ENCODE measurements at regions of chr2 and their contacts with region 1.

Region 1: GRCh38 chr2:37489041-37489456 is 144.6 kb downstream of the QPCT start:
- DNase-seq: no peak
- H3K4me3 ChIP-seq: no peak overlapping the region
- H3K27ac ChIP-seq: no peak overlapping the region
- H3K4me1 ChIP-seq: no peaks in the 10 kb centered on the region
- H3K27me3 ChIP-seq: no peaks in the 10 kb centered on the region
- CTCF ChIP-seq: no peak

Region 2: GRCh38 chr2:37196320-37197195 is 292.5 kb before region 1 on chr2 and contains the start of gene CEBPZOS:
- dilution Hi-C with region 1: no loop called
- DNase-seq: peak; percentile 49
- H3K4me3 ChIP-seq: peak within 1 kb of the TSS; percentile 79 to 90 (median 85)
- H3K27ac ChIP-seq: peak within 1 kb of the TSS; percentile 78
- H3K4me1 ChIP-seq: peaks cover 9% of the 10 kb centered on the region
- H3K27me3 ChIP-seq: no peaks in the 10 kb centered on the region
- CTCF ChIP-seq: no peak
- polyA plus RNA-seq, gene CEBPZOS: 32.8 to 42.9 TPM (median 36.3 TPM) in 3 replicates

Region 3: GRCh38 chr2:37549598-37549997 is 60.5 kb after region 1 on chr2:
- dilution Hi-C with region 1: loop called (anchors 10 kb)
- DNase-seq: no peak
- H3K4me3 ChIP-seq: no peak overlapping the region
- H3K27ac ChIP-seq: no peak overlapping the region
- H3K4me1 ChIP-seq: peaks cover 12% of the 10 kb centered on the region
- H3K27me3 ChIP-seq: no peaks in the 10 kb centered on the region
- CTCF ChIP-seq: no peak